ENCODE measurements at regions of chr2 and their contacts with region 1.

Region 1: GRCh38 chr2:84749442-84749841 is 131.4 kb downstream of the TRABD2A start:
- DNase-seq: no peak
- H3K4me3 ChIP-seq: no peak overlapping the region
- CTCF ChIP-seq: no peak
- POLR2A ChIP-seq: no peak

Region 2: GRCh38 chr2:84776011-84776410 is 26.6 kb after region 1 on chr2:
- intact Hi-C with region 1: loop called (anchors 2 kb)
- DNase-seq: no peak
- H3K4me3 ChIP-seq: no peak overlapping the region
- CTCF ChIP-seq: no peak
- POLR2A ChIP-seq: no peak

Region 3: GRCh38 chr2:85369500-85369899 is 620.1 kb after region 1 on chr2:
- intact Hi-C with region 1: no loop called
- DNase-seq: no peak
- H3K4me3 ChIP-seq: no peak overlapping the region
- CTCF ChIP-seq: no peak
- POLR2A ChIP-seq: no peak